Naive thymus-derived CD8-positive, alpha-beta T cell (primary cell): ENCODE measurements at regions of chr6 and their contacts with region 1.

Region 1: DNA sequence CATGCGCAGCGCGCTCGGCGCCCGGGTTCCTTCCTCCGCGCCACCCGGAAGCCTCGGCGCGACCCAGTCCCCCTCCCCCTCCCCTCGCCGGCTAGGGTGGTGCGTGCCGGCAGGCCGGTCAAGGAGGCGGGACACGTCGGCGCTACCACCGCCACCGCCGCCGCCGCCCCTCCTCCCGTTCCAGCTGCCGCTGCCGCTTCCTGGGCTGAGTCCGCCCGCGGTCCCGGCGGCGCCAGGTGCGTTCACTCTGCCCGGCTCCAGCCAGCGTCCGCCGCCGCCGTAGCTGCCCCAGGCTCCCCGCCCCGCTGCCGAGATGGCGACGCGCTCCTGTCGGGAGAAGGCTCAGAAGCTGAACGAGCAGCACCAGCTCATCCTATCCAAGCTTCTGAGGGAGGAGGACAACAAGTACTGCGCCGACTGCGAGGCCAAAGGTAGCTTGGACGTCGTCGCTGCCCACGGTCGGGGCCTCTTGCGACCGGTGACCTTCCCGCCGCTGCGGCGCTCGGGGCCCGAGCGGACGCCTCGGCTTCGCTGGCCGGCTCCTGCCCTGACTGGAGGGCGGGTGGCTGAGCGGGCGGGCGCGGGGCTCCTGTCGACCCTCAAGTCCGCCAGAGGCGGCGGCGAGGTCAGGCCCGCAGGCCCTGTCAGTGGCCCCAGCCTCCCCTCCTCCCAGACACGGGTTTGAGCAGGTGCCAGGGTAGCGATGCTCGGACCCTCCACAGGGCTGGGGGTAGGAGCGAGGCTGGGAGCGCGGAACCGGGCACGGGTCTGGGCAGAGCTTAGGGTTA is at the start of gene SMAP1:
- DNase-seq: peak; percentile 33 to 94 (median 89)
- ATAC-seq: peak; percentile 88 to 90
- H3K4me3 Mint-ChIP-seq: peak within 1 kb of the TSS; percentile 80 to 95 (median 92)
- H3K27ac Mint-ChIP-seq: peak within 1 kb of the TSS; percentile 91 to 98 (median 96)
- H3K4me1 Mint-ChIP-seq: peaks cover 38 to 58% (median 55%) of the 10 kb centered on the region in 4 donors
- H3K27me3 Mint-ChIP-seq: no peaks in the 10 kb centered on the region
- polyA plus RNA-seq, gene SMAP1: 14.2 to 18.8 (median 16.3) TPM

Region 2: GRCh38 chr6:70413114-70413991 is 254.6 kb before region 1 on chr6 and contains the start of gene FAM135A:
- POLR2A ChIA-PET with region 1: interaction called, 10 read pairs
- DNase-seq: peak; percentile 88 to 96 (median 92)
- ATAC-seq: peak; percentile 87 to 89
- H3K4me3 Mint-ChIP-seq: peak within 1 kb of the TSS; percentile 88 to 100 (median 95)
- H3K27ac Mint-ChIP-seq: peak within 1 kb of the TSS; percentile 85 to 98 (median 93)
- H3K4me1 Mint-ChIP-seq: peaks cover 12 to 23% (median 19%) of the 10 kb centered on the region in 4 donors
- H3K27me3 Mint-ChIP-seq: no peaks in the 10 kb centered on the region
- polyA plus RNA-seq, gene FAM135A: 2.9 to 3.9 (median 3.3) TPM

Region 3: GRCh38 chr6:70566751-70567382 is 101.0 kb before region 1 on chr6 and contains the start of gene SDHAF4:
- POLR2A ChIA-PET with region 1: interaction called, 21 read pairs
- DNase-seq: peak; percentile 89 to 97 (median 94)
- ATAC-seq: peak; percentile 98 to 99
- H3K4me3 Mint-ChIP-seq: peak within 1 kb of the TSS; percentile 77 to 93 (median 86)
- H3K27ac Mint-ChIP-seq: peak within 1 kb of the TSS; percentile 68 to 97 (median 92)
- H3K4me1 Mint-ChIP-seq: peaks cover 4 to 26% (median 15%) of the 10 kb centered on the region in 4 donors
- H3K27me3 Mint-ChIP-seq: no peaks in the 10 kb centered on the region
- polyA plus RNA-seq, gene SDHAF4: 6.1 to 8.7 (median 7.2) TPM

Region 4: DNA sequence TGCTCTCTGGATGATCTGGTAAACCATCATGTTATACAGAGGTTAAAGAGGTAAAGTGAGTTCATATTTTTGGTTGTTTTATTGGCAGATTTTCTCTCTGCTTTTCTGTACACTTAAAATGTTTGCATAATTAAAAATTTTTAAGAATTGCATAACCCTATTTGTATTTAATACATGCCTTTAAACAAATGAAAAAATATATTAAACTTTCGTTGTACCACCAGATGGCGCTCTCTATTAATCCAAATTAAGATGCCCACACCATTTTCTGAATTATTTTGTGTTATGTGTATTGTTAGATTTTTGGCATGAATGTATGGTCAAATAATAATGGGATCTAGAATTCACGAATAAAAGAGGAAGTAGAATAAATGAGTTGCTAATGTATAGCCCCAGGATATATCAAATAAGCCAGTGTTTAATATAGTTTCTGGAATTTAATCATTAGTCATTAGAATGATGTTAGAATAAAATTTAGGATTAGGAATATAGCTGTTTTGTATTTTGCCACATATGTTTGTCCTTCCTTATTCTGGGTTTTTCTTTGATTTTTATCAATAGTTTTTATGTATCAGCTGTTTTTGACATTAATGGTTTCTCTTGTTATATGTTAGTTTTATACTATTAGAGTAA is 38.7 kb after region 1 on chr6:
- POLR2A ChIA-PET with region 1: no interaction called
- DNase-seq: peak in 4 of 10 donors; percentile 11 to 59 (median 52)
- ATAC-seq: no peak
- H3K4me3 Mint-ChIP-seq: no peak overlapping the region
- H3K27ac Mint-ChIP-seq: peak overlapping the region in 1 of 10 donors; percentile 5
- H3K4me1 Mint-ChIP-seq: peaks cover 14 to 58% (median 44%) of the 10 kb centered on the region in 4 donors
- H3K27me3 Mint-ChIP-seq: no peaks in the 10 kb centered on the region